Ovary (tissue), 10 donors: ENCODE measurements at regions of chr5 and their contacts with region 1.

Region 1: GRCh38 chr5:17216176-17216973 is 1.1 kb upstream of the BASP1 start:
- DNase-seq: peak; percentile 71 to 84 (median 79)
- H3K4me3 ChIP-seq: peak overlapping the region; percentile 64
- H3K27ac ChIP-seq: peak overlapping the region in 1 of 2 donors; percentile 42
- H3K4me1 ChIP-seq: peaks cover 1% of the 10 kb centered on the region
- H3K27me3 ChIP-seq: no peaks in the 10 kb centered on the region
- CTCF ChIP-seq: peak; percentile 65 to 78 (median 73)
- EP300 ChIP-seq: no peak
- POLR2A ChIP-seq: no peak

Region 2: GRCh38 chr5:17169507-17169906 is 46.9 kb before region 1 on chr5:
- intact Hi-C with region 1: no loop called
- DNase-seq: no peak
- H3K4me3 ChIP-seq: no peak overlapping the region
- H3K27ac ChIP-seq: no peak overlapping the region
- H3K4me1 ChIP-seq: peaks cover 3% of the 10 kb centered on the region
- H3K27me3 ChIP-seq: no peaks in the 10 kb centered on the region
- CTCF ChIP-seq: no peak
- EP300 ChIP-seq: no peak
- POLR2A ChIP-seq: no peak

Region 3: GRCh38 chr5:17204133-17204489 is 12.3 kb before region 1 on chr5:
- intact Hi-C with region 1: no loop called
- DNase-seq: no peak
- H3K4me3 ChIP-seq: no peak overlapping the region
- H3K27ac ChIP-seq: no peak overlapping the region
- H3K4me1 ChIP-seq: no peaks in the 10 kb centered on the region
- H3K27me3 ChIP-seq: no peaks in the 10 kb centered on the region
- CTCF ChIP-seq: no peak
- EP300 ChIP-seq: no peak
- POLR2A ChIP-seq: no peak

Region 4: DNA sequence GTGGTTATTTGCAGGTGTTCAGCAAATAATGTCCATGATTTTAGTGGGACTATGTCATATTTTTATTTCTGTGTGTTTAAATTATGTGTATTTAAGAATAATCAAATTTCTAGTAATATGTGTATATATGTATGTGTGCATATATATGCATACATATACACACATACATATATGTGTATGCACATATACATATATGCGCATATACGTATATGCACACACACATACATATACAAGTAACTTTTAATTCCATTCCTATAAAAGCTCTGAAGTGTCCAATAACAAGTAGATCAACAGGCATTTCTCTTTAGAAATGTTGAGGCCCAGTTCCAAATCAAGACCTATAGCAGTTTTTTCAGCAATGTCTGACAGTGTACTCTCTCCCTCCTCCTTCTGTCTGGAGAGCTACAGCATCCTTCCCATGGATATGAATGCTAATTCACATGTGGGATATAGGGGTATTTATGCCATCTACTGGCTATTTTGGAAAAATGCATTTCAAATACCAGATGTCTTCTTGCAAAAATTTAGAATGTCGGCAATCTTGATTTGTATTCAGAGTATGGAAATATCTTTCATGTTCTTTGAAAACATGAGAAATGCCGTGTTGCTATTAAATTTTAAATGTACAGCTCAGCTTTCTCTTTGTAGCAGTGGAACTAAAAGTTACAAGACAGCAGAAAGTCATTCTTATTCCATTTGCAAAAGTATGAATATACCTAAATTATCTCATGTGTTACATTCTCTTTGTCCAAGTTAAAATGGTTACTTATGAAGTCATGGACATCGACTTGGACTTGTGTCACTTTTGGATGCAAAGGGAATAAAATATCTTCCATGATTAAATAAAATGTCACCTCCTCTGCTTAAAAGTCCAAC is 1065.5 kb after region 1 on chr5:
- intact Hi-C with region 1: loop called in 1 of 4 experiments (anchors 10 kb)
- DNase-seq: no peak
- H3K4me3 ChIP-seq: no peak overlapping the region
- H3K27ac ChIP-seq: no peak overlapping the region
- H3K4me1 ChIP-seq: no peaks in the 10 kb centered on the region
- H3K27me3 ChIP-seq: no peaks in the 10 kb centered on the region
- CTCF ChIP-seq: no peak
- EP300 ChIP-seq: no peak
- POLR2A ChIP-seq: no peak

Region 5: GRCh38 chr5:18305297-18305924 is 1089.0 kb after region 1 on chr5:
- intact Hi-C with region 1: loop called in 3 of 4 experiments (anchors 5 to 10 kb)
- DNase-seq: no peak
- H3K4me3 ChIP-seq: no peak overlapping the region
- H3K27ac ChIP-seq: no peak overlapping the region
- H3K4me1 ChIP-seq: no peaks in the 10 kb centered on the region
- H3K27me3 ChIP-seq: no peaks in the 10 kb centered on the region
- CTCF ChIP-seq: peak in 1 of 3 donors; percentile 63
- EP300 ChIP-seq: no peak
- POLR2A ChIP-seq: no peak

Region 6: GRCh38 chr5:18314192-18314778 is 1097.9 kb after region 1 on chr5:
- intact Hi-C with region 1: loop called in 3 of 4 experiments (anchors 5 to 10 kb)
- DNase-seq: no peak
- H3K4me3 ChIP-seq: no peak overlapping the region
- H3K27ac ChIP-seq: no peak overlapping the region
- H3K4me1 ChIP-seq: no peaks in the 10 kb centered on the region
- H3K27me3 ChIP-seq: no peaks in the 10 kb centered on the region
- CTCF ChIP-seq: peak in 1 of 3 donors; percentile 14
- EP300 ChIP-seq: no peak
- POLR2A ChIP-seq: no peak